Caco-2 (cell line): ENCODE measurements at regions of chr15 and their contacts with region 1.

Region 1: GRCh38 chr15:96585484-96586386 is 255.2 kb downstream of the NR2F2 start:
- DNase-seq: no peak
- H3K4me3 ChIP-seq: no peak overlapping the region
- H3K4me3 Mint-ChIP-seq: no peak overlapping the region
- H3K27ac Mint-ChIP-seq: no peak overlapping the region
- H3K4me1 ChIP-seq: no peaks in the 10 kb centered on the region
- H3K4me1 Mint-ChIP-seq: no peaks in the 10 kb centered on the region
- H3K27me3 ChIP-seq: no peaks in the 10 kb centered on the region
- H3K27me3 Mint-ChIP-seq: peaks cover 8% of the 10 kb centered on the region
- CTCF ChIP-seq: peak; percentile 8 to 15

Region 2: DNA sequence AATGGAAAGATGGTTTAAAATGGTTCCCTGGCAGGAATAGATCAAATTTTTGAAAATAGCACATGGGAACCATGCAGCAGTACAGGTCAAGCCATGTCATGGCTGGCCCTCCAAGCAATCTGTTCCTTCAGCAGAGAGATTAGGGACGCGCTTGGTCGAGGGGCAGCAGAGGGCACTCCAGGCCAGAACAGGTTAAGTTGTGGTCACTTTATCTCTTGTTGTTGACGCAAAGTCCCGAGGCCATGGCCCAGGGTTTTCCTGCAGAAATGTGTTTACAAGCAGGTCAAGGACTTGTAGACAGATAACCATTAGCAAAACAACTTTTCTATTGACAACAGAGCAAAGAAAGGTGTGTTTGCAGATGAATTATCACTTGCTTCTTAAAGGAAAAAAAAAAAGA is 825.2 kb before region 1 on chr15:
- CTCF ChIA-PET with region 1: no interaction called
- POLR2A ChIA-PET with region 1: no interaction called
- intact Hi-C with region 1: loop called (anchors 5 kb)
- DNase-seq: peak; percentile 51 to 66
- H3K4me3 ChIP-seq: no peak overlapping the region
- H3K4me3 Mint-ChIP-seq: no peak overlapping the region
- H3K27ac Mint-ChIP-seq: no peak overlapping the region
- H3K4me1 ChIP-seq: no peaks in the 10 kb centered on the region
- H3K4me1 Mint-ChIP-seq: peaks cover 12% of the 10 kb centered on the region
- H3K27me3 ChIP-seq: no peaks in the 10 kb centered on the region
- H3K27me3 Mint-ChIP-seq: no peaks in the 10 kb centered on the region
- CTCF ChIP-seq: peak; percentile 46 to 50

Region 3: GRCh38 chr15:97234851-97235610 is 649.3 kb after region 1 on chr15:
- CTCF ChIA-PET with region 1: no interaction called
- POLR2A ChIA-PET with region 1: no interaction called
- intact Hi-C with region 1: loop called (anchors 10 kb)
- DNase-seq: peak in 1 of 2 experiments; percentile 56
- H3K4me3 ChIP-seq: no peak overlapping the region
- H3K4me3 Mint-ChIP-seq: no peak overlapping the region
- H3K27ac Mint-ChIP-seq: no peak overlapping the region
- H3K4me1 ChIP-seq: no peaks in the 10 kb centered on the region
- H3K4me1 Mint-ChIP-seq: peaks cover 5% of the 10 kb centered on the region
- H3K27me3 ChIP-seq: no peaks in the 10 kb centered on the region
- H3K27me3 Mint-ChIP-seq: peaks cover 11% of the 10 kb centered on the region
- CTCF ChIP-seq: peak; percentile 77 to 79